ENCODE measurements at regions of chr2 and their contacts with region 1.

Region 1: GRCh38 chr2:167924556-167924955 is 322.8 kb downstream of the STK39 start:
- DNase-seq: no peak
- ATAC-seq: no peak
- H3K4me3 ChIP-seq: no peak overlapping the region
- H3K27ac ChIP-seq: no peak overlapping the region
- H3K4me1 ChIP-seq: no peaks in the 10 kb centered on the region
- H3K27me3 ChIP-seq: no peaks in the 10 kb centered on the region; the same call in none of the 2 replicates
- CTCF ChIP-seq: no peak

Region 2: GRCh38 chr2:167875529-167875928 is 49.0 kb before region 1 on chr2:
- CTCF ChIA-PET with region 1: no interaction called
- POLR2A ChIA-PET with region 1: no interaction called
- in situ Hi-C with region 1: no loop called
- intact Hi-C with region 1: no loop called
- DNase-seq: no peak
- ATAC-seq: no peak
- H3K4me3 ChIP-seq: no peak overlapping the region
- H3K27ac ChIP-seq: no peak overlapping the region
- H3K4me1 ChIP-seq: no peaks in the 10 kb centered on the region; the same call in 1 of the 2 replicates
- H3K27me3 ChIP-seq: no peaks in the 10 kb centered on the region
- CTCF ChIP-seq: no peak

Region 3: DNA sequence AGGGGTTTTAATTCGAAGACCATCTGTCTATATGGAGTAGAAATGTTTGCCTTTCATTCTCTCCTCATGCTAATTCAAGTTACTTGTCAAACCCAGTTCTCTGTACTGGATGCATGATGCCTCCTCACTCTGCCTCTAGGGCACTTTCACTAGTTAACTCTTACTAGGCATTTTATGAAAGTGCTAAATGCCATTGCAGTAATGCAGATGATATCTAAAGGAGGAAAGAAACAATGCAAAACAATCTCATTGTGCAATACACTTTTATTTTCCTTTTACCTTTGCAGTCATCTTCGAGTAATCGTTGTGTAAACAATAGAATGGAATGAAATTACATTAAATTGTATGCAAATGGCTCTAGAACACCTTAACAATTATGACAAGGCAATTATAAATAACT is 29.2 kb after region 1 on chr2:
- CTCF ChIA-PET with region 1: no interaction called
- POLR2A ChIA-PET with region 1: no interaction called
- in situ Hi-C with region 1: no loop called
- intact Hi-C with region 1: loop called (anchors 1 kb)
- DNase-seq: no peak
- ATAC-seq: no peak
- H3K4me3 ChIP-seq: no peak overlapping the region
- H3K27ac ChIP-seq: no peak overlapping the region
- H3K4me1 ChIP-seq: no peaks in the 10 kb centered on the region
- H3K27me3 ChIP-seq: no peaks in the 10 kb centered on the region
- CTCF ChIP-seq: no peak

Measured in Panc1 (cell line).